ENCODE measurements at regions of chr20 and their contacts with region 1.

Region 1: DNA sequence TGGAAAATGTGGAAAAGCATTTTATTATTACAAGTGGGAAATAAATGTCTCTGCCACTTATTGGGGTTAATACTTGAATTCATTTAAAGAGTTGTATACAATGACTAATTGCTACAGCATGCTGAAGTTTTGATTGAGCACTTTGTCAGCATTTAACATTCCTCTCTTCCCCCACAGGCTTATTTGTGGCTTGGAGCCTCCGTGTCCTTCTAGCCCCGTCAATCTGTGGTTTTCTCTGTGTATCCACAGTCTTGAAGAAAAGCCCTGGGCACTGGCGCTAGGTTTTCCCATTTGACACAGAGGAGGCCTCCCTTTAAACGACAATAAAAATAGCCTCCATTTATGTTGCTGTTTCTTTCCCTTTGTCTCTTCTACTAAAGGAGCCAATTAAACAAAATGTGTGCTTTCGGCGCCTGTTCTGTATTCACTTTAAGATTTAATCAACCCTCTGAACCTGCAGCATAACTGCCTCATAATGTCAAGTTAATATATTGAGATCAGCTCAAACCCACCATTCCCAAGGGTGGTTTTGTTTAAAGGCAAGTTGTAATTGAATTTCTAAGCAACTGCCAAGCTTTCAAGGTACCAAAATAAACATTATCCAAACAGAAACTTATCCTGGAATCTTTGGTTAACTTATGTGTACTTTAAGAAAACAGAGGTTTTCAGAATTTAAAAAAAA is 326.6 kb upstream of the RNF24 start:
- H3K4me3 Mint-ChIP-seq: no peak overlapping the region
- H3K27ac Mint-ChIP-seq: no peak overlapping the region
- H3K4me1 Mint-ChIP-seq: peaks cover 14% of the 10 kb centered on the region
- H3K27me3 Mint-ChIP-seq: peaks cover 16% of the 10 kb centered on the region

Region 2: GRCh38 chr20:4272225-4272624 is 69.7 kb before region 1 on chr20:
- intact Hi-C with region 1: loop called (anchors 10 kb)
- H3K4me3 Mint-ChIP-seq: no peak overlapping the region
- H3K27ac Mint-ChIP-seq: no peak overlapping the region
- H3K4me1 Mint-ChIP-seq: no peaks in the 10 kb centered on the region
- H3K27me3 Mint-ChIP-seq: peaks cover 2% of the 10 kb centered on the region

Measured in dendritic cell treated with granulocyte-macrophage colony-stimulating factor and Interleukin-4, amounts not matched to agents 40 ng/mL and 50 ng/mL, for 4 days (primary cell).